HEK293 (cell line): ENCODE measurements at regions of chr2 and their contacts with region 1.

Region 1: GRCh38 chr2:195575879-195576401 is 81.1 kb upstream of the SLC39A10 start:
- H3K4me3 ChIP-seq: no peak overlapping the region
- H3K27ac ChIP-seq: no peak overlapping the region
- H3K4me1 ChIP-seq: no peaks in the 10 kb centered on the region
- CTCF ChIP-seq: no peak

Region 2: DNA sequence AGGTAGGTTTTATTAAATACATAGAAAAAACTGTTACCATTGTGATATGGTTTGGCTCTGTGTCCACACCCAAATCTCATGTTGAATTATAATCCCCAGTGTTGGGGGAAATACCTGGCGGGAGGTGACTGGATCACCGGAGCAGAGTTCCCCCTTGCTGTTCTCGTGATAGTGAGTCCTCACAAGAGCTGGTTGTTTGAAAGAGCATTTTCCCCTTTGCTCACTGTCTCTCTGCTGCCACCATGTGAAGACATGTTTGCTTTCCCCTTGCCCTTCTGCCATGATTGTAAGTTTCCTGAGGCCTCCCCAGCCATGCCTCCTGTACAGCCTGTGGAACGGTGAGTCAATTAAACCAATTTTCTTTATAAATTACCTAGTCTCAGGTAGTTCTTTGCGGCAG is 271.6 kb before region 1 on chr2:
- CTCF ChIA-PET with region 1: no interaction called
- POLR2A ChIA-PET with region 1: no interaction called
- H3K4me3 ChIP-seq: no peak overlapping the region
- H3K27ac ChIP-seq: no peak overlapping the region
- H3K4me1 ChIP-seq: no peaks in the 10 kb centered on the region
- CTCF ChIP-seq: no peak

Region 3: GRCh38 chr2:195664528-195664927 is 88.6 kb after region 1 on chr2:
- CTCF ChIA-PET with region 1: interaction called, 39 read pairs
- POLR2A ChIA-PET with region 1: no interaction called
- H3K4me3 ChIP-seq: no peak overlapping the region
- H3K27ac ChIP-seq: no peak overlapping the region
- H3K4me1 ChIP-seq: peaks cover 3% of the 10 kb centered on the region; the same call in 1 of the 2 replicates
- CTCF ChIP-seq: no peak

Region 4: DNA sequence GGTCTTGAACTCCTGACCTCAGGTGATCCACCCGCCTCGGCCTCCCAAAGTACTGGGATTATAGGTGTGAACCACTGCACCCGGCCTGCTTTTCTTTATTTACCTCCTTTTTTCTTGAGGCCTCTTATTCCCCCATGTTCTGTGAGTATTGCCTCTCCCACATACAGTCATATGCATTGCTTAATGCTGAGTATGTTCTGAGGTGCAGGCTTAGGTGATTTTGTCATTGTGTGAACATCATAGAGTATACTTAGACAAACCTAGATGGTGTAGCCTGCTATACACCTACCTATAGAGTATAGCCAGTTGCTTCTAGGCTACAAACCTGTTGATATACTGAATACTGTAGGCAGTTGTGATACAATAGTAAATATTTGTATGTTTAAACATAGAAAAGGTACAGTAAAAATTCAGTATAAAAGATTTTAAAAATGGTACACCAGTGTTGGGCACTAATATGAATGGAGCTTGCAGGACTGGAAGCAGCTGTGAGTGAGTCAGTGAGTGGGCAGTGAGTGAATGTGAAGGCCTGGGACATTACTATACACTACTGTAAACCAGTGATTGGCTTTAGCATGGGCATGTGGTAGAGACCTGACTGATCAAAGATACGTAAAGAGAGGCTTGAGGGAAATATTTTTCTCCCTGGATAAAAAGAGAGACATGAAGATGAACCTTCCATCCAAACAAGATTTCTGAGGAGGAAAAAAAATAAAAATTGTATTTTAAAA is 98.7 kb after region 1 on chr2:
- CTCF ChIA-PET with region 1: no interaction called
- POLR2A ChIA-PET with region 1: no interaction called
- H3K4me3 ChIP-seq: no peak overlapping the region
- H3K27ac ChIP-seq: no peak overlapping the region
- H3K4me1 ChIP-seq: no peaks in the 10 kb centered on the region
- CTCF ChIP-seq: no peak